Ovary (tissue), 10 donors: ENCODE measurements at regions of chr5 and their contacts with region 1.

Region 1: DNA sequence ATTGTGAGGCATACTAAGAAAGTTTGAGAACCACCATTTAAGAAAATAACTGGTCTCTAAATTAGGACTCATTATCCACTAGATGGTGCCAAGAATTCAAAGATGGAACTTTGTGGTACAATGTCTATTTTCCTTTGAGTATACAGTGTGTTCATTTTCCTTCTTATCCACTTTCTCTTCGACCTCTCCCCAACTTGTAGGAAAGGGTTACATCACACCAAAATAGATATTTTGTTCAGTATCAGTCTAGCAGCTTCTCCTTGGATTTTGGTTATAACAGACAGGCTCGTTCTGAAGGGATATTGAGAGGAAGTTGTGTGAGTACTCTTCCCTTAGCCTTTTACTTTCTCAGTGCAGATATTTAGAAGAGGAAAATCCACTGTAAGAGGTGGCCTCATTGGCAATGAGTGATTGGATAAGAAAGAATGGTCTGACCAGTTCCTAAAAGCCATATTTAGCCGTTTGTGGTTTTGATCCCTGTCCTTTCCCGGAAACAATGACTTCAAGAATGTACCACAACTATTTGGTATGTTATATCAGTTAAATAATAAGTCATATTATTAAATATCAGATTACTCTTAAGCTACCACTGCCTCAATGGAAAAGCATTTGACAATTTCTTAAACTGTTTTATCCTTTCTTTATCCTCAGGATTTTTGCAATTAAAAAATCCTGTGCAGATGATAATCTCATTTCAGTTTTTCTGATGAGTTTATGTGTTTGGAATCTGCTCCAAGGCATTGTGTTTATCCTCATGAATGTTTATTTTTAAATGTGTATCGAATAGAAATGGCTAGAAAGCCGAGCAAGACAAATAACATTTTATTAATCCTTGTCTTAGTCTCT is 69.0 kb upstream of the GRAMD2B start:
- DNase-seq: no peak
- H3K4me3 ChIP-seq: no peak overlapping the region
- H3K27ac ChIP-seq: peak overlapping the region in 1 of 2 donors; percentile 23
- H3K4me1 ChIP-seq: peaks cover 3% of the 10 kb centered on the region
- H3K27me3 ChIP-seq: no peaks in the 10 kb centered on the region
- CTCF ChIP-seq: peak; percentile 49 to 81 (median 59)
- EP300 ChIP-seq: no peak
- POLR2A ChIP-seq: peak; percentile 20

Region 2: DNA sequence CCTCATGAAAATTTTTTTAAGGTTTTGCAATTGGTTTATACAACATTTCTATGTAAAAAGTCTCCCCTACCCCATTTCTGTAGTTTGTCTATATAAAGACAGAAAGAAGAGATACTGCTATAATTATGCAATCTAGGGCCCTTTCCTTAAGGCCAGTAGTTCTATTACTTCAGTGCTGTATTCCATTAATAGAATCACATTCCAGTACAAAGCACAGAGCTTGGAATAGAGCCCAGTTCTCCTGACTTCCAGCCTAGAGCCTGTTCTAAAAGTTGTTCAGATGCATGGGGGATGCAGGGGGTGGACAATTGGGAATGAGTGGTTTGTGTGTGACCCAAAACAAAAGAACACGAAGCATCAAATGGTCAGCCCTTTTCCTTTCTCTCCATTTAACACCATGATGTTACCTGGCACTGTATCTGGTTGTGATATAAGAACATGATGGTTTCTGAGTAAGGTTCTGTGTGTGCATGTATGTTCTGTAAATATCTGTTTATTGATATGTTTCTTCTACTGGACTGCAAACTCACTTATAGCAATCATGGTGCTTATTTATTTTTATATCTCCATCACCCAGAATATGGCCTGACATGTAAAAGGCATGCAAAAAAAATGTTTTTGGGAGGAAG is 60.8 kb after region 1 on chr5:
- intact Hi-C with region 1: loop called in 1 of 4 experiments (anchors 10 kb)
- DNase-seq: peak; percentile 37 to 68 (median 47)
- H3K4me3 ChIP-seq: no peak overlapping the region
- H3K27ac ChIP-seq: peak overlapping the region in 1 of 2 donors; percentile 47
- H3K4me1 ChIP-seq: peaks cover 10% of the 10 kb centered on the region
- H3K27me3 ChIP-seq: no peaks in the 10 kb centered on the region
- CTCF ChIP-seq: no peak
- EP300 ChIP-seq: no peak
- POLR2A ChIP-seq: no peak

Region 3: DNA sequence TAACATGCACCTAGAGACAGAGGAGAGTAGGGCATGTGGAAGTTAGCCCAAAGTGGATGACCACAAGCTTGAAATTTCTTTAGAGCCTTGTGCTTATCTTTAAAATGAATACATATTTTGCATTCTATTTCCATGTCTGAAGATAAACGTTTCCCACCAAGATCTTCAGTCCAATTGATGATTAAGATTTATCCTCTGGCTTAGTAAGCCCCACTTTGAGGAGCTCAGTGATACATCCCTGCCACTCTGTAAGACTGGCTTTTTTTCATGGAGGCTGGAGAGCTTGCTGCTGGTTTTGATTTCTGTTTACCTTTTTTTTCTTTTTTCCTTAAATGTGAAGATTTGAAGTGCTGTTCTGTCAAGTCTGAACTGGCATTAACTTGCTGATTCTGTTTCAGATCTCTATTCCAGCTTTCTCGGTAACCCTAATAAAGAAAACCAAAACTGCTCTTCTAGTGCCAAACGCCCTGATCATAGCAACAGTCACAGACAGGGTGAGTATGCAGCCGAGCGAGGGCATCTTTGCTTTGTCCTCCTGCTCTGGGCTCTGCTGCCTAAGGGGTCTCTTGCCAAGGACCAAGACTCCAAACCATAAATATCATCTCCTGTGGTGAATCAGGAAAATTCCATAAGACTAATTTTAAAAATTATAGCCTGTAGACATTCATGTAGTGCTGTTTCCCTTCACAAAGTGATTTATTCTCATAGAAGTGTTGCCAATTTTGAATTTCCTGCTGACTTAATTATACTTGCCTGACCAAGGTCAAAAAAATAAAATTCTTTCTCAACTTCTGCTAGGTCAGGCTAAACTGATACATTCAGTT is 123.3 kb after region 1 on chr5:
- intact Hi-C with region 1: loop called in 1 of 4 experiments (anchors 5 kb)
- DNase-seq: peak in 3 of 5 donors; percentile 56 to 59 (median 56)
- H3K4me3 ChIP-seq: no peak overlapping the region
- H3K27ac ChIP-seq: peak overlapping the region; percentile 26 to 62
- H3K4me1 ChIP-seq: peaks cover 11% of the 10 kb centered on the region
- H3K27me3 ChIP-seq: no peaks in the 10 kb centered on the region
- CTCF ChIP-seq: no peak
- EP300 ChIP-seq: no peak
- POLR2A ChIP-seq: no peak

Region 4: GRCh38 chr5:126536874-126537273 is 182.6 kb after region 1 on chr5:
- intact Hi-C with region 1: loop called (anchors 2 to 5 kb)
- DNase-seq: no peak
- H3K4me3 ChIP-seq: no peak overlapping the region
- H3K27ac ChIP-seq: no peak overlapping the region
- H3K4me1 ChIP-seq: peaks cover 6% of the 10 kb centered on the region
- H3K27me3 ChIP-seq: no peaks in the 10 kb centered on the region
- CTCF ChIP-seq: no peak
- EP300 ChIP-seq: no peak
- POLR2A ChIP-seq: no peak

Region 5: GRCh38 chr5:126544087-126544740 is 190.0 kb after region 1 on chr5:
- intact Hi-C with region 1: loop called in 3 of 4 experiments (anchors 5 kb)
- DNase-seq: no peak
- H3K4me3 ChIP-seq: no peak overlapping the region
- H3K27ac ChIP-seq: no peak overlapping the region
- H3K4me1 ChIP-seq: no peaks in the 10 kb centered on the region
- H3K27me3 ChIP-seq: no peaks in the 10 kb centered on the region
- CTCF ChIP-seq: peak in 1 of 3 donors; percentile 26
- EP300 ChIP-seq: no peak
- POLR2A ChIP-seq: no peak

Region 6: DNA sequence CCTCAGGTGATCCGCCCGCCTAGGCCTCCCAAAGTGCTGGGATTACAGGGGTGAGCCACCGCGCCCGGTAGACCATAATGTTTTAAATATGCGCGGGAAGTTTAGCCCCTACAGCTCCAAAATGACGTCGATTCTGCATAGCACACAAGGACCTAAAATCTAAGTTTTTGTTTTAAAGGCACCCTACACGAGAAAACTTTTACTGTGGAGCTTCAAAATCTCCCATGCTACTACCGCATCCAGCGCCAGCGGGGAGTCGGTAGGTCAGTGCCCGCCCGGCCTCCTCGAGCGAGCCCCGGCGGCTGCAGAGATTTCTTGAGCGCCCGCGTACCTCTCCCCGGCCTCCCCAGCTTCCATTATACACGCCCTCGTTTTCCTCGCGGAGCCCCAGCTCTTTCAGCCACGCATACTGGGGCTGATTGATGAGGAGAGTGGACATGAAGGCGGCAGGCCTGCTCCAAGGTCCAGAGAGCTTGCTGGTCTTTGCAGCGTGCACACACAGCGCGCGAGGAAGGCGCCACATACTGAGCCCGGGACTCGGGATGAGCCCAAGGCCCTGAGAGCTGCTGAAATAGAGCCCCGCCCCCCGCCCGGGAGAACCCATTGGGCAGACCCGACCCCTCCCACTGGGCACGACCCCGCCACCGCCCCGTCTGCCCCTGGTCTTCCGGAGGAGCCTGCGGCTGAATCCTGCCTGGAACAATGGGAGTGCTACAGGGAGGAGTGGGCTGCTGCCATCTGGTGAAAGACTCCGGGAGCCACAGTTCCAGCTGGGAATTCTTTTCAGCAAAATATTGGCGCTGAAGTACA is 240.6 kb after region 1 on chr5 and contains the start of gene ALDH7A1:
- intact Hi-C with region 1: loop called in 3 of 4 experiments (anchors 5 to 10 kb)
- DNase-seq: peak; percentile 93 to 95 (median 94)
- H3K4me3 ChIP-seq: peak within 1 kb of the TSS; percentile 48
- H3K27ac ChIP-seq: peak within 1 kb of the TSS; percentile 26 to 70
- H3K4me1 ChIP-seq: peaks cover 3% of the 10 kb centered on the region
- H3K27me3 ChIP-seq: no peaks in the 10 kb centered on the region
- CTCF ChIP-seq: peak in 2 of 3 donors; percentile 30 to 53
- EP300 ChIP-seq: no peak
- POLR2A ChIP-seq: peak; percentile 62
- total RNA-seq, gene ALDH7A1: 28.3 to 133 (median 99.2) TPM